ENCODE measurements at regions of chr4 and their contacts with region 1.

Region 1: GRCh38 chr4:16205298-16206164 is 20.7 kb downstream of the TAPT1 start:
- DNase-seq: no peak
- ATAC-seq: peak; percentile 60 to 87
- H3K4me3 ChIP-seq: no peak overlapping the region
- H3K27ac ChIP-seq: peak overlapping the region in 1 of 4 donors; percentile 40
- H3K4me1 ChIP-seq: peaks cover 34 to 45% of the 10 kb centered on the region in 2 donors
- H3K27me3 ChIP-seq: no peaks in the 10 kb centered on the region
- CTCF ChIP-seq: peak; percentile 36 to 60 (median 45)
- POLR2A ChIP-seq: no peak

Region 2: DNA sequence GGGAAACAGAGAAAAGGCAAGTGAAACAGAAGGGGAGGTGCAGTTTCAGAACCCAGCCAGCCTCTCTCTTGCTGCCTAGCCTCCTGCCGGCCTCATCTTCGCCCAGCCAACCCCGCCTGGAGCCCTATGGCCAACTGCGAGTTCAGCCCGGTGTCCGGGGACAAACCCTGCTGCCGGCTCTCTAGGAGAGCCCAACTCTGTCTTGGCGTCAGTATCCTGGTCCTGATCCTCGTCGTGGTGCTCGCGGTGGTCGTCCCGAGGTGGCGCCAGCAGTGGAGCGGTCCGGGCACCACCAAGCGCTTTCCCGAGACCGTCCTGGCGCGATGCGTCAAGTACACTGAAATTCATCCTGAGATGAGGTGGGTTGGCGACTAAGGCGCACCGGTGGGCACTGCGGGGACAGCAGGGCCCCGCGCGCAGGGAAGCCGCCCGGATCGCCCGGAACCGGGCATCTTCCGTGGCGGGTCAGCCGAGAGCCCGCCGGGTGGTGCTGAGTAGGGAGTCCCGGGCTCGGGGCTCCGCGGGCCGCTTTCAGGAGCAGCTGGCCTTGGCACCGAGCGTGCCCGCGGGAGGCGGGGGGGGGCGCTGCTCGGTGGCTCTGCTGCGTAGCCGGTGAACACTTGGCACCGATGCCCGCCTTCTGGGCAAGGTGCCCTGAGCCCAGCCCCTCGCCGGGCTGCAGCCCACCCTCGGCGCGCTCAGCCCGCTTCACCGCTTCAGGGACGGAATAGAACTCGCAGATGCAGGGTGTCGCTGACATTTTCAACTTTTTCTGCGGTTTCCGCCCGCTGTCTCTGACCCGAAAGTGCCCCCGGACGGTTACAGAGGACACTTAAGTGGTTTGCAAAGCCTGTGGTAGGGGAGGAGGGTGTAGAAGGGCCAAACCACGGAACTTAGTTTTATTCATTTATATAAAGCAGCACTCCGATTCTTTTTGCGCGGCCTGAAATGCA is 427.0 kb before region 1 on chr4 and contains the start of gene CD38:
- in situ Hi-C with region 1: loop called in 1 of 4 experiments (anchors 25 kb)
- intact Hi-C with region 1: no loop called
- DNase-seq: peak; percentile 46 to 64
- ATAC-seq: peak; percentile 76 to 86
- H3K4me3 ChIP-seq: peak within 1 kb of the TSS; percentile 71 to 86 (median 78)
- H3K27ac ChIP-seq: peak within 1 kb of the TSS; percentile 89 to 91 (median 90)
- H3K4me1 ChIP-seq: peaks cover 6 to 27% of the 10 kb centered on the region in 2 donors
- H3K27me3 ChIP-seq: no peaks in the 10 kb centered on the region
- CTCF ChIP-seq: no peak
- POLR2A ChIP-seq: peak in 1 of 2 donors; percentile 6
- total RNA-seq, gene CD38: 0.73 to 9.0 (median 2.4) TPM

Region 3: DNA sequence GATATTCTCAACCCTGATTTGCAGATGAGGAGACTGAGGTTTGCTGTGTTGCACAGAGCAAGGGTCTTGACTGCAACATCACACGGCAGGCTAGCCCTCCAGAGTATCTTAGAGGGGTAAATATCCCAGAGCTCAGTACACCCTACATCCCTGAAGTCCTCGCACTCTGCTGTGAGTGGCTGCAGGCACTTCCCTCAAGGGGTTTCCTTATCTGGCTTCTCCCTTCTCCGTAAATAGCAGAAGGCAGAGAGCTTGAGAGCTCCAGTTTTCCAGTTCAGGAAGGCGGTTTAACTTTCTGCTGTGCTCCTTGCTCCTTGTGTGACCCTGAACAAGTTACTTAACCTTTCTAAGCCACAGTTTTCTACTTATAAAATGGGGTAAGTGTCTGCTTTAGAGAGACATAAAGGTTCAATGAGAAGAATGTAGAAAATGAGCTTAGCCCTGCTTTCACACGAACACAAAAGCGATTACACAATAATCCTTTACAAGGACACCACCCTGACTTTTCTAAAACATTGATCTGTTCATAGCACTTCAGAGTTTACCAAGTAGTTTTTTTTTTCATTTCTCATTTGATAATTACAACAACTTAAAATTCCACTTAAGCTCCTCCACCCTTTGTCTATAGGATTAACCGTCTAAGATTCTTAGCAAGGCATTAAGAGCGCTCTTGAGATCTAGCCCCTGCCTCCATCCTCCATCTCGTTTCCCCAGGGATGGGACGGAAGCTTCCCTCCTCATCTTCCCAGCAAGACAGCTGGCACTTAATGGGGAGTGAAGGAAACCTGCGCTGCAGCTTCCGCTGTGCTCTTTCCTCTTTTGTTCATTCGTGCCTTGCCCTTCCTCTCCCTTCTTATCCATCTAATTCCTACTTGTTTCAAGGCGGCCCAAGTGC is 47.7 kb before region 1 on chr4:
- in situ Hi-C with region 1: no loop called
- intact Hi-C with region 1: no loop called
- DNase-seq: no peak
- ATAC-seq: no peak
- H3K4me3 ChIP-seq: no peak overlapping the region
- H3K27ac ChIP-seq: no peak overlapping the region
- H3K4me1 ChIP-seq: peaks cover 0 to 17% of the 10 kb centered on the region in 2 donors
- H3K27me3 ChIP-seq: no peaks in the 10 kb centered on the region
- CTCF ChIP-seq: no peak
- POLR2A ChIP-seq: no peak

Region 4: GRCh38 chr4:16505726-16506125 is 300.2 kb after region 1 on chr4:
- in situ Hi-C with region 1: no loop called
- intact Hi-C with region 1: no loop called
- DNase-seq: no peak
- ATAC-seq: no peak
- H3K4me3 ChIP-seq: no peak overlapping the region
- H3K27ac ChIP-seq: no peak overlapping the region
- H3K4me1 ChIP-seq: no peaks in the 10 kb centered on the region
- H3K27me3 ChIP-seq: no peaks in the 10 kb centered on the region
- CTCF ChIP-seq: no peak
- POLR2A ChIP-seq: no peak

Measured in gastrocnemius medialis (tissue), 4 donors.